ENCODE measurements at regions of chr15 and their contacts with region 1.

Region 1: DNA sequence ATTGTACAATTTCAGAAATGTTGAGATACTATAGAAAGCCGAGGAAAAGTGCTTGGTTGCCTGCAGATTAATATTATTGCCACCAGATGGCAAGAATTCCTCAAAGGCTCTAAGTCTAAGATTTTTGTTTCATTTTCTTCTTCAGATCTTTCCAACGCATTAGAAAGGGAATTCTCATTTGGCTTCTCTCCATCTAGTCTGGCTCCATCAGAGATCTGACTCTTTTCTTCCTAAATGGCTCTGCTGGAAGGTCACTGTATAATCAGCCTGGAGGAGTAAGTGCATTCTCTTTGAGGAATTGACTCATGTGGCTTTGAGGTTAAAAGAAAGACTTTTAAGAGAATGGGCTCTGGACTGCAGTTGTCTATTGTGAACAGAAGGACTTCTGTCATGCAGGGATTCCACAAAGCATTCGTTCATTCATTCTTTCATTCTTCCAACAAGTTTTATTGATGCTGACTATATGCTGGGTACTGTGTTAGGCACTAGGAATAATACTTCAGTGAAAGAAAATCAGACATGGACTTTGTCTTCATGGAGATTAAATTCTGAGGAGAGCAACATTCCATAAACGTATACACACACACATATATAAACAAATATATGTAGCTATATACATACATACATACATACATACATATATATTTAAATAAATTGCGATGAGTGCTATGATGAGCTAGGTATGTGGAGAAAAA is 55.3 kb downstream of the SLC28A2 start:
- DNase-seq: peak; percentile 9
- H3K4me3 Mint-ChIP-seq: no peak overlapping the region
- H3K27ac Mint-ChIP-seq: no peak overlapping the region
- H3K4me1 Mint-ChIP-seq: peaks cover 13% of the 10 kb centered on the region
- H3K27me3 Mint-ChIP-seq: peaks cover 13% of the 10 kb centered on the region
- CTCF ChIP-seq: peak; percentile 40

Region 2: DNA sequence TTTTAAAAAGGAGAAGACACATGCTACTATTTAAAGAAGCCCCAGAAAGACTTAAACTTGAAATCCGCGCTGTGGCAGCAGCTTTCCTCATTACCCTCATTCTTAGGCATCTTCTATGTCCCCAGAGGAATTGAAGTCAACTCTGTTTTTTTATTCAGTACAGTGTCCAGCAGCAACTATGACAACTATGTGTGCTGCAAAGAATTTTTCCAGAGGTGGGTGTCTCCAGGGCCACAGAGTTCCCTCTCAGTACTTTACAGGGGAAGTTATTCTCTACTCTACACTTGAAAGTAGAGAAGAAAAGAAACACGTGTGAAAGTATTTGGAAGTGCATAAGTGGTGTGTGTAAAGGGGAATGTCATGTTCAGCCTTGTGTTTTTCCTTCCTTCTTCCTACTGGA is 39.0 kb after region 1 on chr15:
- CTCF ChIA-PET with region 1: interaction called, 3 read pairs
- intact Hi-C with region 1: loop called (anchors 5 kb)
- DNase-seq: no peak
- H3K4me3 Mint-ChIP-seq: no peak overlapping the region
- H3K27ac Mint-ChIP-seq: peak overlapping the region; percentile 21
- H3K4me1 Mint-ChIP-seq: peaks cover 42% of the 10 kb centered on the region
- H3K27me3 Mint-ChIP-seq: no peaks in the 10 kb centered on the region
- CTCF ChIP-seq: no peak

Region 3: DNA sequence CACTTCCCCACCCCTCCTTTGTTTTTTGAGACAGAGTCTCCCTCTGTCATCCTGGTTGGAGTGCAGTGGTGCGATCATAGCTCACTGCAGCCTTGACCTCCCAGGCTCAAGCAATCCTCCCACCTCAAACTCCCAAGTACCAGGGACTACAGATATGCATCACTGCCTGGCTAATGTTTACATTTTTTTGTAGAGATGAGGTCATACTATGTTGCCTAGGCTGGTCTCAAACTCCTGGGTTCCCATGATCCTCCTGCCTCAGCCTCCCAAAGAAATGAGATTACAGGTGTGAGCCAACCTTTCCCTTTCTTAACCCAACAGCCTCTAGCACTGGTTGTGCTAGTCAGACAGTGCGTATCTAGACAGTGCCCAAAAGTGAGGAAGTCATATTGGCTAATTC is 77.3 kb after region 1 on chr15:
- CTCF ChIA-PET with region 1: interaction called, 10 read pairs
- intact Hi-C with region 1: no loop called
- DNase-seq: no peak
- H3K4me3 Mint-ChIP-seq: no peak overlapping the region
- H3K27ac Mint-ChIP-seq: no peak overlapping the region
- H3K4me1 Mint-ChIP-seq: no peaks in the 10 kb centered on the region
- H3K27me3 Mint-ChIP-seq: no peaks in the 10 kb centered on the region
- CTCF ChIP-seq: no peak

Region 4: DNA sequence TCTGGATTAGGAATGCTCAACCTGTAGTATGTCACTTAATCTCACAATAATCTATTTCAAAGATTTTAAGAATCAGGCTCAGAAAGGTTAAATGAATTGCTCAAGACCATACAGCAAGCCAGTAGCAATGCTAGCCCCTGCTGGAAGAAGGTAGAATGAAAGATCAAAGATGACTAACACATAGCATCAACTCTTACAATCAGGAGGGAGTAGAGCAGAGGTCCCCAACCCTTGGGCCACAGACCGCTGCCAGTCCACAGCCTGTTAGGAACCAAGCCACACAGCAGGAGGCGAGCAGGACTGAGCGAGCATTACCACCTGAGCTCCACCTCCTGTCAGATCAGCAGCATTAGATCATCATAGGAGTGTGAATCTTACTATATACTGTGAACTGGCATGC is 86.5 kb after region 1 on chr15:
- CTCF ChIA-PET with region 1: interaction called, 3 read pairs
- intact Hi-C with region 1: loop called (anchors 1 kb)
- DNase-seq: peak; percentile 10
- H3K4me3 Mint-ChIP-seq: no peak overlapping the region
- H3K27ac Mint-ChIP-seq: no peak overlapping the region
- H3K4me1 Mint-ChIP-seq: peaks cover 12% of the 10 kb centered on the region
- H3K27me3 Mint-ChIP-seq: no peaks in the 10 kb centered on the region
- CTCF ChIP-seq: no peak

Region 5: DNA sequence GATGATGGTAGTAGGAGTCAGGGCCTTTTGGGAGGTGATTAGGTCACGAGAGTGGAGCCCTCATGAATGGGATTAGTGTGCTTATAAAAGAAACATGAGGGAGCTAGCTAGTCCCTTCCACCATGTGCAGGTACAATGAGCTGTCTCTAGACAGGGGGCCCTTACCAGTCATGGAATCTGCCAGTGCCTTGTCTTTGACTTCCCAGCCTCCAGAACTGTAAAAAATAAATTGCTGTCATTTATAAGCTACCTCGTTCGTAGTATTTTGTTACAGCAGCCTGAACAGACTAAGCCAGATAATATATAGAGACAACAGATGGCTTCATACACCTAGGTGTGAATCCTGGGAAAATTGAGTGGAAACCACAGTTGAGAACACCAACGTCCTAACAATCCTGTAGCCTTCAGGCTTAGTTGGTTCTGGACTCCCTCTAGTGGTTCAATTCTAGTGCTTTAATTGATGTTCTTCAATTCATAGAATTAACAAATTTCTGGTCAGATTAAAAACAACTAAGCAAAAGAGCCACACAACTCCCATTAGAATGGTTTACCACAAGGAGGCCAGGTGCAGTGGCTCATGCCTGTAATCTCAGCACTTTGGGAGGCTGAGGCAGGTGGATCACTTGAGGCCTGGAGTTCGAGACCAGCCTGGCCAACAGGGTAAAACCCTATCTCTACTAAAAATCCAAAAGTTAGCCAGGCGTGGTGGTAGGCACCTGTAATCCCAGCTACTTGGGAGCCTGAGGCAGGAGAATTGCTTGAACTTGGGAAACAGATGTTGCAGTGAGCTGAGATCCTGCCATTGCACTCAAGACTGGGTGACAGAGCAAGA is 92.2 kb after region 1 on chr15:
- CTCF ChIA-PET with region 1: interaction called, 3 read pairs
- intact Hi-C with region 1: loop called (anchors 1 kb)
- DNase-seq: no peak
- H3K4me3 Mint-ChIP-seq: no peak overlapping the region
- H3K27ac Mint-ChIP-seq: no peak overlapping the region
- H3K4me1 Mint-ChIP-seq: peaks cover 21% of the 10 kb centered on the region
- H3K27me3 Mint-ChIP-seq: no peaks in the 10 kb centered on the region
- CTCF ChIP-seq: peak; percentile 49